ENCODE measurements at regions of chr6 and their contacts with region 1.

Region 1: GRCh38 chr6:20279608-20280287 is 67.5 kb upstream of the MBOAT1 start:
- DNase-seq: no peak
- ATAC-seq: no peak
- H3K4me3 Mint-ChIP-seq: no peak overlapping the region
- H3K27ac Mint-ChIP-seq: no peak overlapping the region
- H3K4me1 Mint-ChIP-seq: no peaks in the 10 kb centered on the region
- H3K27me3 Mint-ChIP-seq: peaks cover 42% of the 10 kb centered on the region

Region 2: GRCh38 chr6:20092071-20092566 is 187.6 kb before region 1 on chr6:
- CTCF ChIA-PET with region 1: no interaction called
- POLR2A ChIA-PET with region 1: no interaction called
- intact Hi-C with region 1: loop called in 1 of 2 experiments (anchors 10 kb)
- DNase-seq: no peak
- ATAC-seq: peak; percentile 23
- H3K4me3 Mint-ChIP-seq: no peak overlapping the region
- H3K27ac Mint-ChIP-seq: no peak overlapping the region
- H3K4me1 Mint-ChIP-seq: no peaks in the 10 kb centered on the region
- H3K27me3 Mint-ChIP-seq: no peaks in the 10 kb centered on the region

Region 3: DNA sequence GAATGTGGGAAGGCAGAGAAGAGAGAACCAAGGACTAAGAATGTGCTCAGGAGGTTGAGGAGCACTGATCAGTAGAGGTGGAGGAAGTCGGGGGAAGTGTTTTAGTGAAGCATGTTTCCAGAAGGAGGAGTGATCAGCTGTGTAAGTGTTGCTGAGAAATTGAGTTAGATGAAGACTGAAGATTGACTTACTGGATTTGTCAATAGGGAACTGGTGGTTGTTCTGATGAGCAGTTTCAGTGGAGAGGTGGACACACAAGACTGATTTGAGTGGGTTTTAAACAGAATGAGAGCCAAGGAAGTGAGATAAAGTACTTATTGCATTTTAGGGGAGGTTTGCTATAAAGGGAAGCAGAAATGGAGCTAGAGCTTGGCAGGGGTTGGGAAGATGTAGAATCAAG is 437.1 kb after region 1 on chr6:
- CTCF ChIA-PET with region 1: no interaction called
- POLR2A ChIA-PET with region 1: no interaction called
- intact Hi-C with region 1: no loop called
- DNase-seq: no peak
- ATAC-seq: peak; percentile 42
- H3K4me3 Mint-ChIP-seq: no peak overlapping the region
- H3K27ac Mint-ChIP-seq: no peak overlapping the region
- H3K4me1 Mint-ChIP-seq: peaks cover 18% of the 10 kb centered on the region
- H3K27me3 Mint-ChIP-seq: no peaks in the 10 kb centered on the region

Measured in activated CD4-positive, alpha-beta T cell treated with anti-CD3 and anti-CD28 coated beads for 36 hours (primary cell).